Activated CD4-positive, alpha-beta T cell treated with anti-CD3 and anti-CD28 coated beads for 36 hours (primary cell): ENCODE measurements at regions of chr6 and their contacts with region 1.

Region 1: GRCh38 chr6:135451693-135452092 is 45.8 kb downstream of the AHI1 start:
- DNase-seq: no peak
- ATAC-seq: no peak
- H3K4me3 Mint-ChIP-seq: no peak overlapping the region
- H3K27ac Mint-ChIP-seq: no peak overlapping the region
- H3K4me1 Mint-ChIP-seq: no peaks in the 10 kb centered on the region
- H3K27me3 Mint-ChIP-seq: no peaks in the 10 kb centered on the region

Region 2: GRCh38 chr6:135329851-135330803 is 121.6 kb before region 1 on chr6:
- CTCF ChIA-PET with region 1: no interaction called
- POLR2A ChIA-PET with region 1: no interaction called
- intact Hi-C with region 1: no loop called
- DNase-seq: no peak
- ATAC-seq: no peak
- H3K4me3 Mint-ChIP-seq: no peak overlapping the region
- H3K27ac Mint-ChIP-seq: no peak overlapping the region
- H3K4me1 Mint-ChIP-seq: no peaks in the 10 kb centered on the region
- H3K27me3 Mint-ChIP-seq: no peaks in the 10 kb centered on the region

Region 3: GRCh38 chr6:135465307-135465706 is 13.6 kb after region 1 on chr6:
- CTCF ChIA-PET with region 1: interaction called, 10 read pairs
- POLR2A ChIA-PET with region 1: no interaction called
- intact Hi-C with region 1: no loop called
- DNase-seq: no peak
- ATAC-seq: no peak
- H3K4me3 Mint-ChIP-seq: no peak overlapping the region
- H3K27ac Mint-ChIP-seq: no peak overlapping the region
- H3K4me1 Mint-ChIP-seq: peaks cover 5% of the 10 kb centered on the region
- H3K27me3 Mint-ChIP-seq: no peaks in the 10 kb centered on the region

Region 4: GRCh38 chr6:135675862-135676261 is 224.2 kb after region 1 on chr6:
- CTCF ChIA-PET with region 1: no interaction called
- POLR2A ChIA-PET with region 1: no interaction called
- intact Hi-C with region 1: loop called in 1 of 2 experiments (anchors 5 kb)
- DNase-seq: peak; percentile 51
- ATAC-seq: peak; percentile 82
- H3K4me3 Mint-ChIP-seq: no peak overlapping the region
- H3K27ac Mint-ChIP-seq: no peak overlapping the region
- H3K4me1 Mint-ChIP-seq: peaks cover 19% of the 10 kb centered on the region
- H3K27me3 Mint-ChIP-seq: no peaks in the 10 kb centered on the region

Region 5: DNA sequence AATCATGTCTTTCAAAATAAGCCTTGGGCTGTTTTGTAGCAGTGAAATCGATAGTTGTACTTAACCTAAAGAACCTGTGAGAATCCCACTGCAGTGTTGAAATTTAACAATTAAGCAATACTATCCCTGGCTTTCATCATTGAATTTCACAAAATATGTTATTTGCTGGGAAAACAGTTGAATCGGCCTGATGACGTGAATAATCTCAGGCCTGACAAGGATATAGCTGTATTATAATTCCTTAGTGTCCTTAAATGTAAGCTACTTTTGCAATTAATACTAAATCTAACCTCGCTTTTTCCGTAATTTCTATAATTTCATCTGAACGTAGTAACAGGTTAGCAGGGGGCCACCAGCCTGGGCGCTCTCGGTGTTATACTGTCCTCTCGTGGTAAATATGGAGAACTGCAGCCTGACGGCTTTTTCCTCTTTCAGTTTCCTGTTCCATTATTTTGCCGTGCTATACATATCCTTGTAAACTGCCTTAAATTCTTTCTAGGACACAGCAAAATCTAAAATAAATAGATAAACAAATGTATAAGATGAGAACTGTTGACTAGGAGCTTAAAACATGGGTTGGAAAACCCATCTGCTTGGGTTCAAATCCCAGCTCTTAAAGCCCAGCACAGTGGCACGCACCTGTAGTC is 774.5 kb after region 1 on chr6:
- CTCF ChIA-PET with region 1: interaction called, 8 read pairs
- POLR2A ChIA-PET with region 1: no interaction called
- intact Hi-C with region 1: loop called (anchors 2 to 5 kb)
- DNase-seq: peak; percentile 72
- ATAC-seq: peak; percentile 80
- H3K4me3 Mint-ChIP-seq: no peak overlapping the region
- H3K27ac Mint-ChIP-seq: no peak overlapping the region
- H3K4me1 Mint-ChIP-seq: peaks cover 11% of the 10 kb centered on the region
- H3K27me3 Mint-ChIP-seq: no peaks in the 10 kb centered on the region